ENCODE measurements at regions of chr4 and their contacts with region 1.

Region 1: GRCh38 chr4:128590773-128591172 is 218.7 kb upstream of the JADE1 start:
- DNase-seq: no peak
- ATAC-seq: peak; percentile 55; the same call in 2 of the 3 replicates
- H3K4me3 ChIP-seq: no peak overlapping the region
- H3K27ac ChIP-seq: no peak overlapping the region
- H3K4me1 ChIP-seq: no peaks in the 10 kb centered on the region; a peak in 2 of 5 replicates
- H3K27me3 ChIP-seq: no peaks in the 10 kb centered on the region
- CTCF ChIP-seq: no peak
- EP300 ChIP-seq: no peak
- POLR2A ChIP-seq: no peak
- RAD21 ChIP-seq: no peak

Region 2: DNA sequence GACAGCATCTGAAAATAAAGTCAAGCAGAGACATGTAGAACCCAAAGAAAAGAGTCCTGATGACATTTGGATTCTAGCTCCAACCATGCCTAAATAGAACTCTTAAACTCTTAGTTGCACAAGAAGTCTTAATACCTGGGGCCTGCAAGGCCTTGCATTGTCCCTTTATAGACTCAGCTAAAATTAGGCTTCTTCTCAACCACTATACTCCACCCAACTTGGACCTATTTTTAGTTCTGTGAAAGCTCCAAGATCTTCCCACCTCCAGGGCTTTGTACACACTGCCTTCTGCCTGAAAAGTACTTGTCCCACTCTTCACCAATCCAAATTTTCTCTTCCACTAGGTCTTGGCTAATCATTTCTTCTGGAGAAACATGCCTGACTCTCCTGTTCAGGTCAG is 673.6 kb before region 1 on chr4:
- CTCF ChIA-PET with region 1: no interaction called
- POLR2A ChIA-PET with region 1: no interaction called
- in situ Hi-C with region 1: loop called (anchors 10 kb)
- intact Hi-C with region 1: no loop called
- DNase-seq: no peak
- ATAC-seq: peak; percentile 26; the same call in 2 of the 3 replicates
- H3K4me3 ChIP-seq: no peak overlapping the region
- H3K27ac ChIP-seq: no peak overlapping the region
- H3K4me1 ChIP-seq: no peaks in the 10 kb centered on the region; a peak in 1 of 5 replicates
- H3K27me3 ChIP-seq: no peaks in the 10 kb centered on the region
- CTCF ChIP-seq: no peak
- EP300 ChIP-seq: no peak
- POLR2A ChIP-seq: no peak
- RAD21 ChIP-seq: no peak

Region 3: DNA sequence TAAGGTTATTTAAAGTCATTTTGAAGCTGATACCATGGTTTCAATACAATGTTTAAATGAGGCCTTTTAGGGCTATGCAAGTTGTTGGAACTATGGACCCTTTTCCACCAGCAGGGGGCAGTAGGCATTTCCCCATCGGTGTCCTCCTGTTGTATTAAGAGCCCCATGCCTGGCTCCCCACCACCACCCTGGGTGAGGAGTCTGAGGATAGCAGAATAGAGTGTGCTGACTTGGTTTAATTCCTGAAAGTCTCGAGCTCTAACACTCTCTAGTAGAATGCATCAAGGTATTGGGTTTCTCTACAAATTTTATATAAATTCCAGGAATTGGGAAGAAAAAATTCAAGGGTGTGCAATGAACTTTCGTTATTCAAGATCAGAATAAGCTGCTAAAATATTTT is 16.1 kb before region 1 on chr4:
- CTCF ChIA-PET with region 1: no interaction called
- POLR2A ChIA-PET with region 1: no interaction called
- in situ Hi-C with region 1: no loop called
- intact Hi-C with region 1: no loop called
- DNase-seq: peak; percentile 79 to 89 (median 80)
- ATAC-seq: peak; percentile 96
- H3K4me3 ChIP-seq: no peak overlapping the region
- H3K27ac ChIP-seq: no peak overlapping the region
- H3K4me1 ChIP-seq: peaks cover 6 to 8% of the 10 kb centered on the region in 2 experiments; a peak in 3 of 5 replicates
- H3K27me3 ChIP-seq: no peaks in the 10 kb centered on the region
- CTCF ChIP-seq: peak; percentile 75 to 90 (median 85)
- EP300 ChIP-seq: peak; percentile 11; the same call in 1 of the 2 replicates
- POLR2A ChIP-seq: no peak
- RAD21 ChIP-seq: peak; percentile 84

Measured in K562 (cell line).